ENCODE measurements at regions of chr10 and their contacts with region 1.

Region 1: GRCh38 chr10:22308390-22308789 is 7.8 kb upstream of the COMMD3 start:
- DNase-seq: peak; percentile 41
- H3K4me3 Mint-ChIP-seq: no peak overlapping the region
- H3K27ac Mint-ChIP-seq: peak overlapping the region; percentile 71
- H3K4me1 Mint-ChIP-seq: peaks cover 29% of the 10 kb centered on the region
- H3K27me3 Mint-ChIP-seq: peaks cover 1% of the 10 kb centered on the region

Region 2: GRCh38 chr10:22228943-22229801 is 79.2 kb before region 1 on chr10:
- intact Hi-C with region 1: loop called (anchors 2 kb)
- DNase-seq: peak; percentile 77
- H3K4me3 Mint-ChIP-seq: peak overlapping the region; percentile 92
- H3K27ac Mint-ChIP-seq: peak overlapping the region; percentile 98
- H3K4me1 Mint-ChIP-seq: peaks cover 32% of the 10 kb centered on the region
- H3K27me3 Mint-ChIP-seq: peaks cover 11% of the 10 kb centered on the region

Region 3: DNA sequence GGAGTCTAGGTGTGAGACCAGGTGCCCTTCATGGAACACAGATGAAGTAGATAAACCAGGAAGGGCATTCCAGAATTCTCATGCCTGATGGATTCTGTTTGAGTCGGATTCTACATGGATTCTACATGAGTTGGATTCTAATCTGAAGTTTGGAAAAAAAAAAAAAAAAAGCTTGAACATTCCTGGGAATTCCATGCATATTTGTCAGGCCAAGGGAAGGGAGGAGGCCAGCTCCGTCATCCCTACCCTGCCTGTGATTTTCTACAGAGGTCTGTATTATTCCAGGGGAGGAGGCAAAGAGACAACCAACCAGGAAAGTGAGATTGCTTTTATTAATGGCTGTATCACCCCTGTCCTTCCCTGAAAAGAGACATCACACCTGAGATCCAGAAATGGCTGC is 62.8 kb before region 1 on chr10:
- intact Hi-C with region 1: loop called (anchors 1 kb)
- DNase-seq: no peak
- H3K4me3 Mint-ChIP-seq: no peak overlapping the region
- H3K27ac Mint-ChIP-seq: no peak overlapping the region
- H3K4me1 Mint-ChIP-seq: peaks cover 38% of the 10 kb centered on the region
- H3K27me3 Mint-ChIP-seq: no peaks in the 10 kb centered on the region

Region 4: DNA sequence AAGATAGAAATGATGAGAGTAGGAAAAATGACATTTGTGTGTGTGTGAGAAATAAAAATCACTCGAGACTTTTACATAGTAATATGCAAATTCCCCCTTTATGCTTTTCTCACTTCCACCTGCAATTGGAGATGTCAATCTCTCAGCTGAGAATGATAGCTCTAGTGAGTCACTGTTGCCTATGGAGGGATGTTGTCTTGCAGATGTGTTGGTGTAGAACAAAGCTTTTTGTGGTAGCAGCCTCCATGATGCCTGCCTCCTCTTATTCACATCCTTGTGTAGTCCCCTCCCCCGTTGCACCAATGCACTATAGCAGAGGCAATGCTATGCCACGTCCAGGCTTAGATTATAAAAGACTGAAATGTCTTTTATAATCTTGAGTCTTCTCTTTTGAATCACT is 70.7 kb after region 1 on chr10:
- intact Hi-C with region 1: loop called (anchors 1 kb)
- DNase-seq: peak; percentile 7
- H3K4me3 Mint-ChIP-seq: peak overlapping the region; percentile 27
- H3K27ac Mint-ChIP-seq: peak overlapping the region; percentile 81
- H3K4me1 Mint-ChIP-seq: peaks cover 30% of the 10 kb centered on the region
- H3K27me3 Mint-ChIP-seq: peaks cover 3% of the 10 kb centered on the region

Region 5: DNA sequence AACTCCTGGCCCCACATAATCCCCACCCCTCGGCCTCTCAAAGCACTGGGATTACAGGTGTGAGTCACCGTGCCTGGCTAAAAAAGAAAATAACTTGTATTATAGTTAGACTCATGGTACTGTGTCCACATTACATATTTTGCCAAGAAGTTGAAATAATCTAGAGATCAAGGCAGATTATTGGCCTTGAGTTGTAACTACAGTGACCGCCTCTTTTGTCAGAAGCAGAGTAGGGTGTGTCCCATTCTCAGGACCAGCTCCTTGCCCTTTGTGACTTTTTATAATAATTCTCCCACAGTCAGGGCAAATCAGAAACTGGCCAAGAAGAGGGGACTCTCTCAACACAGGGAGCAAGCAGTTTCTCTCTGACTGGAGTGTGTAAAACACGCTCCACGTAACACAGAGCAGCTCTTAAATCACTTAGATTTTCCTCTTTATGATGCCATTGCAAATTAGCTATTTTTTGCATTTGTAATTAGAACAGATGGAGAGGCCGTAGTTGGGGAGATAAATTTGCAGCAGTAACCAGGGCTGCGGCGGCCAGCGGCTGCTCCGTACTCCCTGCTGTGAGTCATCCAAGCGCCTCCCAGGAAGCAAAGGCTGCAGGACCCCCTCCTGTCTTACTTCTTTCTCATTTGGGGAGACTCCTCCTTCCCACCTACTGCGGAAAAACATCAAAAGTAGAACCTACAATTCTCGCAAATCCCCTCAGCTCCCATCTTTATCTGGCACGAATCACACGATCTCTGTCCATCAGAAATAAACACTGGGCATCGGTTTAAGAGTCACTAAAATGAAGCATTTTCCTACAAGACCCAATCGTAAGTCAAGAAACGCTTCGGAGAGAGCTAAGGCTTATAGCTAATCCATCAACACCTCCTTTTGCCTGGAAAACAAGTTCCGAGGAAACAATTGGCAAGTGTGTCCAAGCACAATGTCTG is 754.9 kb after region 1 on chr10:
- intact Hi-C with region 1: no loop called
- DNase-seq: no peak
- H3K4me3 Mint-ChIP-seq: no peak overlapping the region
- H3K27ac Mint-ChIP-seq: no peak overlapping the region
- H3K4me1 Mint-ChIP-seq: no peaks in the 10 kb centered on the region
- H3K27me3 Mint-ChIP-seq: peaks cover 10% of the 10 kb centered on the region

Measured in activated T-helper 1 cell treated with anti-CD3 and anti-CD28 coated beads, Interleukin-12 subunit alpha, Interleukin-12 subunit beta, Interleukin-2, Interleukin-4 antibody, amounts not matched to agents 30 ng/mL and 10 ng/mL and 1 ng/mL, durations not matched to agents 14 hours and 24 hours and 36 hours (primary cell).